ENCODE measurements at regions of chr4 and their contacts with region 1.

Region 1: DNA sequence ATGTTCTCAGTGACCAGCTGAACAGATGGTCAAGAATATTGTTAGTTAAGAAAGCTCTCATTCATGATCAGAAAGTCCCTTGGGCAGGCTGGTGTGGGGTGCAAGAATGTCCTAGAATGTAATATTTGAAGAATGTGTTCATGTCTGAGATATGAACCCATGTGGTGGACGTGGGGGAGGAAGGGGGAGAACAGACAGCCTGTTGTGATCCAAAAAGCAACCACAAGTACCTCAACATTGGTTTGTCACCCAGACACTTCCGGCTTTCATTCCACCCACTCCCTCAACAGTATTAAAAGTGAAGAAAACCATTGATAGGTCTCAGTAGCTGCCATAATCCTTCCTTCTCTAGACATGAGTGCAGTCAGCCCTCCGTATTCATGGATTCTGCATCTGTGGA is 82.2 kb downstream of the MAML3 start:
- DNase-seq: peak; percentile 87 to 98 (median 97)
- H3K4me3 ChIP-seq: peak overlapping the region in 2 of 7 experiments; percentile 29 to 43
- H3K27ac ChIP-seq: no peak overlapping the region
- H3K4me1 ChIP-seq: peaks cover 9 to 68% (median 49%) of the 10 kb centered on the region in 4 experiments
- H3K27me3 ChIP-seq: no peaks in the 10 kb centered on the region

Region 2: GRCh38 chr4:139973015-139973414 is 98.8 kb before region 1 on chr4:
- CTCF ChIA-PET with region 1: no interaction called
- POLR2A ChIA-PET with region 1: no interaction called
- DNase-seq: no peak
- H3K4me3 ChIP-seq: no peak overlapping the region
- H3K27ac ChIP-seq: no peak overlapping the region
- H3K4me1 ChIP-seq: peaks cover 18 to 81% (median 43%) of the 10 kb centered on the region in 4 experiments
- H3K27me3 ChIP-seq: no peaks in the 10 kb centered on the region

Region 3: GRCh38 chr4:140056015-140056414 is 15.8 kb before region 1 on chr4:
- CTCF ChIA-PET with region 1: interaction called, 31 read pairs
- POLR2A ChIA-PET with region 1: interaction called, 3 read pairs
- DNase-seq: no peak
- H3K4me3 ChIP-seq: no peak overlapping the region
- H3K27ac ChIP-seq: no peak overlapping the region
- H3K4me1 ChIP-seq: peaks cover 29 to 81% (median 58%) of the 10 kb centered on the region in 4 experiments
- H3K27me3 ChIP-seq: no peaks in the 10 kb centered on the region

Region 4: DNA sequence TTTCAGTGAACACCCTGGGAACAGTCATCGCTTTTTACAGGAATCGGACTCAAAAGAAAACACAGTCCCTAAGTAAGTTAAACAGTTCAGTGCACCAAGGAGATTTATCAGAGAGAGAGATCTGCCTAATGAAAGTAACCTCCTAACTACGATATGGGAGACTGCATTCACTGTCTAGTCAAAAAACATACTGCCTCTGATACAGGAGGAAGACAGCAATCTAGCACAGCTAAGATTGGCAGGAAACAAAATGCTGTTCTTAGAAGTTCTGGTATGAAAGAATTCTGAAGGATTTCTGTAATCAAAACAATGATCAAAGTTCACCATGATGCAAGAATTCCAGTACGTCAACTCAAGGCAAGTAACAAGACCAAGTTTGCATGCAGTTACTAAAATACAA is 10.6 kb before region 1 on chr4:
- CTCF ChIA-PET with region 1: interaction called, 31 read pairs
- POLR2A ChIA-PET with region 1: interaction called, 3 read pairs
- DNase-seq: no peak
- H3K4me3 ChIP-seq: no peak overlapping the region
- H3K27ac ChIP-seq: no peak overlapping the region
- H3K4me1 ChIP-seq: peaks cover 9 to 54% (median 22%) of the 10 kb centered on the region in 4 experiments
- H3K27me3 ChIP-seq: no peaks in the 10 kb centered on the region

Region 5: DNA sequence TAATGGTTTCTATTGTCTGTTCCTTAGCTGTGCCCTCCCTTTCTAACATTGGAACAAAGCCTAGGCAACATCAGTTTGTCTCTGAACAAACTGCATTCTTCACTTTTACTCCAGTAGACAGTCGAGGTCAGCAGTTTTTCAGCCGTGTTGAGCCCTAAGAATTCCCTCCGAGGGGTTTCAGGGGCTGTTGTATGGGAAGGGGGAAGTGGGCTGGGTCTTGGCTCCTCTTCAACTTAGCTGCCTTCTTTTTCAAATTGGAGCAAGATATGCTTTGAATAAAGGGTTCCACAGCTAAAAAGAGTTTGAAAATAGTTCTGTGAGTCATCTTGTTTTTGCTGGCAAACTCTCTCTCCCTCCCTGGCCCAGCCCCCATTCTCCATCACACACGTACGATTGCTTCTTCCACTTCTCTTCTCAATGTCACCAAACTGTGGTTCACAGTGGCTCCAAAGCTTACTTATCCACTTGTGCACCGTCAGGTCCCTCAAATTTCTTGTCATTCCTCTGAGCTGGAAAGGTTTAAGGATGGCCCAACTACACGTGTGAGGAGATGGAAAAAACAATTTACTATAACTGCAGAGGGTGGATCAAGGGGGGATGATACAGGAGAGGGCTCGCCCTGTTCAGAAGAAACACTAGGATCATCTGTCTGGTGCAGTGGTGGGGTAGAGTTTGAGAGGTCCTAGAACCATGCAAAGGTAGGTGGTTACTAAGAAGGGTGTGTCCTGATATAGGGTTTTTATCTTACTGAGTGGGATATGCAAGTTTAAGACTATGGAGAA is 91.4 kb after region 1 on chr4:
- CTCF ChIA-PET with region 1: no interaction called
- POLR2A ChIA-PET with region 1: no interaction called
- DNase-seq: peak in 2 of 3 donors; percentile 47 to 51
- H3K4me3 ChIP-seq: peak overlapping the region in 3 of 7 experiments; percentile 44 to 62 (median 51)
- H3K27ac ChIP-seq: no peak overlapping the region
- H3K4me1 ChIP-seq: peaks cover 3 to 16% (median 13%) of the 10 kb centered on the region in 4 experiments
- H3K27me3 ChIP-seq: no peaks in the 10 kb centered on the region